Activated CD4-positive, alpha-beta T cell treated with anti-CD3 and anti-CD28 coated beads, Interleukin-2, amount 10 ng/mL, durations not matched to agents 24 days and 14 days (primary cell): ENCODE measurements at regions of chr1 and their contacts with region 1.

Region 1: GRCh38 chr1:115062542-115063011 is 26.7 kb downstream of the TSPAN2 start:
- DNase-seq: peak; percentile 96
- H3K4me3 Mint-ChIP-seq: peak overlapping the region; percentile 59
- H3K27ac Mint-ChIP-seq: peak overlapping the region; percentile 88
- H3K4me1 Mint-ChIP-seq: peaks cover 25% of the 10 kb centered on the region
- H3K27me3 Mint-ChIP-seq: no peaks in the 10 kb centered on the region

Region 2: DNA sequence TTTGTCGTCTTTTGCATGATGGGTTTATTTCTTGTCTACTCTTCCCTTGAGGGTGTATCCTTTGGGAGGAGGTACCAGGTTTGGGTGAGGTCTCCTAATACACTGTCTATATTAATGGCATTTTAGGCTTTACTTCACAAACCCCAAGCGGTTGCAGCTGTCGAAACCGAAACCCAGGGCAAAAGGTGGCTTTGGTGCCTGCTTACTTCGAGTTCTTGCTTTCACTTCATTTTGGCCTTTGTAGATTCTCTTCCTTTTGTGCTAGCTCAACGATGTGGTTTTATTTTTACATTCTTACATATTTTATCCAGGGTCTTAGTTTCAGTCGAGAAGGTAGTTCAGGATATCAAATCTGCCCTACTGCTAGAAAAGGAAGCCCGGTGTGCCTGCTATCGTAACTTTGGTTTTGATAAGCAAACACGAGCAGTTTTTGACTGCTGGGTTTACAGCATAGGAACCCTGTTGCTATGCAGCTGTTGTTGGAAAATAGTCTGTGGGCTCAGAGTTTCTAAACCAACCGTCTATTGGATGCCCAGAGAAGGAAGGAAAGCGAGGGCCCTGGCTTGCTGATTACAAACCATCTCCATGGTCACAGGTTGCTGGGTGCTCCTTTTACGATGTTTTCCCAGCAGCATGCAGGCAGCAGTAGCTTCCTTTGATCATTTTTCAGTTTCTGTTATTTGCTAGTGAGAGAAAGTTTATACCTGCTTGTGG is 36.6 kb after region 1 on chr1:
- intact Hi-C with region 1: loop called (anchors 1 kb)
- DNase-seq: peak; percentile 92
- H3K4me3 Mint-ChIP-seq: peak overlapping the region; percentile 87
- H3K27ac Mint-ChIP-seq: peak overlapping the region; percentile 96
- H3K4me1 Mint-ChIP-seq: peaks cover 30% of the 10 kb centered on the region
- H3K27me3 Mint-ChIP-seq: peaks cover 23% of the 10 kb centered on the region